ENCODE measurements at regions of chr1 and their contacts with region 1.

Region 1: GRCh38 chr1:116881879-116882520 is 27.7 kb upstream of the PTGFRN start:
- DNase-seq: peak; percentile 39
- ATAC-seq: peak; percentile 54
- H3K4me3 ChIP-seq: no peak overlapping the region
- H3K27ac ChIP-seq: no peak overlapping the region
- H3K4me1 ChIP-seq: peaks cover 11% of the 10 kb centered on the region; the same call in 1 of the 2 replicates
- H3K27me3 ChIP-seq: no peaks in the 10 kb centered on the region
- CTCF ChIP-seq: peak; percentile 51

Region 2: DNA sequence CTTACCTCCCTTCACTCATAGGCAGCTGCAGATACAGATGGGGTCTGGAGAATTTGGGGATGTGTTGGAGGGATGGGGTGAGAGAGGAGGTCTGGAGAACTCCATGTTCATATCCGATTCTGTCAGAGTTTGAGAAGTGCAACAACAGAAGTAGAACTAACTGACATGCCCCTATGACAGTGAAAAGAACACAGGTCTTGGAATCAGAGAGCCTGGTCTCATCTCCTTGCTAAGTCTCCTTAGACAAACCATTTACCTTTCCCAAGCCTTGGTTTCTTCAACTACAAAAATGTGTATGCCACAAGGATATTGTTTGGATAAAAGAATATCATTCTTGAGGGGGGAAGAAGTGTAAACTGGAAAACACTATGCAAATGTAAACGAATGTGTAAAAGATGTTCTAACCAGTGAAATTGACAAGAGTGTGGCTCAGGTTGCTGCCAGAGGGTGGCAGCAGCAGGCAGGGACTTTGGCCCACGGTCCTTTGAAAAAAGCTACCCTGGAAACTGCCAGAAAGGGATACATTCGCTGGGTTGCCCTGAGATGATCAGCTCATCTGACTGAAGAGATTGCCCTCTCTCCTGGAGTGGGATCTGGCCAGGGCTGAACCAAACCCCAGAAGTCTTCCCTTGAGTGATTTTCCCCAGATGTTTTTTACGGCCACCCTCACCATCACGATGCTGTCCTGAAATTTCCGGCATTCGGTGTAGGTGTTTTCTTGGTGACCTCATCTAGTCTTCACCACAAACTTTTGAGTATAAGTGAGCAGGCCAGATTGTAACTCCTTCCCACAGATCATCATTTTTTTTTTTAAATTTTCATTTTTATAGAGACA is 144.8 kb before region 1 on chr1:
- CTCF ChIA-PET with region 1: no interaction called
- POLR2A ChIA-PET with region 1: no interaction called
- intact Hi-C with region 1: loop called (anchors 2 kb)
- DNase-seq: peak; percentile 68
- ATAC-seq: peak; percentile 59; the same call in 1 of the 2 replicates
- H3K4me3 ChIP-seq: no peak overlapping the region
- H3K27ac ChIP-seq: no peak overlapping the region
- H3K4me1 ChIP-seq: no peaks in the 10 kb centered on the region
- H3K27me3 ChIP-seq: no peaks in the 10 kb centered on the region
- CTCF ChIP-seq: peak; percentile 89

Region 3: DNA sequence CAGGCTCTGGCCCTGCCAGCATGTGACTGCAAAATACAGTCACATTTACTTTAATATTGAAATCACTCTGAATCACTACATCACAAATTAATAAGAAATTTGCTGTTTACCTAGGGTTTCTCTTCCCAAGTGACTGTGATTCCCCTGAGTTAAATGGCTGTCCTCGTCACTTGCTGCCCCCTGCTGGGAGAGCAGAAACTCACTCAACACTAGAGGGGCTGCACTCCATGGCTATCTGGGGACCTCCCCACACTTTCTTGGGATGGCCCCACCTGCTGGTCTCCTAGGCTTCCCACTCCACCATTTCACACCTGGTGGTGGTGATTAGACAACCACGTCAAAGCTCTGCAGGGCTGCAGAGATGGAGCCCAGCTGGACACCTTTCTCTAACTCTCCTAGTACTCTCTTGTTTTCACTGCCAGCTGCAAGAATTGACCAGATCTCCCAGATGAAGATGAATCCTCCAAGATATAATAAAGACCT is 64.4 kb before region 1 on chr1:
- CTCF ChIA-PET with region 1: no interaction called
- POLR2A ChIA-PET with region 1: no interaction called
- intact Hi-C with region 1: loop called (anchors 10 kb)
- DNase-seq: peak; percentile 79
- ATAC-seq: peak; percentile 93
- H3K4me3 ChIP-seq: no peak overlapping the region
- H3K27ac ChIP-seq: no peak overlapping the region
- H3K4me1 ChIP-seq: 0 out of 2 replicates have a peak, but pooled peaks cover 10% of the 10 kb centered on the region
- H3K27me3 ChIP-seq: no peaks in the 10 kb centered on the region
- CTCF ChIP-seq: peak; percentile 97

Region 4: GRCh38 chr1:117077267-117077666 is 195.3 kb after region 1 on chr1:
- CTCF ChIA-PET with region 1: no interaction called
- POLR2A ChIA-PET with region 1: interaction called, 35 read pairs
- intact Hi-C with region 1: no loop called
- DNase-seq: peak; percentile 88
- ATAC-seq: peak; percentile 99
- H3K4me3 ChIP-seq: no peak overlapping the region
- H3K27ac ChIP-seq: peak overlapping the region; percentile 57
- H3K4me1 ChIP-seq: peaks cover 19% of the 10 kb centered on the region
- H3K27me3 ChIP-seq: no peaks in the 10 kb centered on the region
- CTCF ChIP-seq: no peak